Naive thymus-derived CD4-positive, alpha-beta T cell (primary cell): ENCODE measurements at regions of chr19 and their contacts with region 1.

Region 1: GRCh38 chr19:18058208-18059030 is 28.3 kb downstream of the IL12RB1 start:
- DNase-seq: peak; percentile 76 to 88 (median 82)
- ATAC-seq: peak; percentile 97
- H3K4me3 ChIP-seq: peak overlapping the region; percentile 31
- H3K4me3 Mint-ChIP-seq: peak overlapping the region in 8 of 10 donors; percentile 32 to 62 (median 53)
- H3K27ac ChIP-seq: peak overlapping the region; percentile 62
- H3K27ac Mint-ChIP-seq: peak overlapping the region; percentile 71 to 89 (median 86)
- H3K4me1 ChIP-seq: peaks cover 8 to 13% of the 10 kb centered on the region in 2 donors
- H3K4me1 Mint-ChIP-seq: peaks cover 0 to 18% (median 16%) of the 10 kb centered on the region in 7 donors
- H3K27me3 ChIP-seq: no peaks in the 10 kb centered on the region
- H3K27me3 Mint-ChIP-seq: no peaks in the 10 kb centered on the region

Region 2: GRCh38 chr19:17938092-17938845 is 120.2 kb before region 1 on chr19:
- CTCF ChIA-PET with region 1: interaction called, 8 read pairs
- POLR2A ChIA-PET with region 1: interaction called, 4 read pairs
- intact Hi-C with region 1: loop called (anchors 1 kb)
- DNase-seq: peak; percentile 67 to 85 (median 78)
- ATAC-seq: peak; percentile 98
- H3K4me3 ChIP-seq: no peak overlapping the region
- H3K4me3 Mint-ChIP-seq: no peak overlapping the region
- H3K27ac ChIP-seq: no peak overlapping the region
- H3K27ac Mint-ChIP-seq: no peak overlapping the region
- H3K4me1 ChIP-seq: peaks cover 5 to 8% of the 10 kb centered on the region in 2 donors
- H3K4me1 Mint-ChIP-seq: peaks cover 5 to 7% (median 6%) of the 10 kb centered on the region in 7 donors
- H3K27me3 ChIP-seq: no peaks in the 10 kb centered on the region
- H3K27me3 Mint-ChIP-seq: no peaks in the 10 kb centered on the region

Region 3: DNA sequence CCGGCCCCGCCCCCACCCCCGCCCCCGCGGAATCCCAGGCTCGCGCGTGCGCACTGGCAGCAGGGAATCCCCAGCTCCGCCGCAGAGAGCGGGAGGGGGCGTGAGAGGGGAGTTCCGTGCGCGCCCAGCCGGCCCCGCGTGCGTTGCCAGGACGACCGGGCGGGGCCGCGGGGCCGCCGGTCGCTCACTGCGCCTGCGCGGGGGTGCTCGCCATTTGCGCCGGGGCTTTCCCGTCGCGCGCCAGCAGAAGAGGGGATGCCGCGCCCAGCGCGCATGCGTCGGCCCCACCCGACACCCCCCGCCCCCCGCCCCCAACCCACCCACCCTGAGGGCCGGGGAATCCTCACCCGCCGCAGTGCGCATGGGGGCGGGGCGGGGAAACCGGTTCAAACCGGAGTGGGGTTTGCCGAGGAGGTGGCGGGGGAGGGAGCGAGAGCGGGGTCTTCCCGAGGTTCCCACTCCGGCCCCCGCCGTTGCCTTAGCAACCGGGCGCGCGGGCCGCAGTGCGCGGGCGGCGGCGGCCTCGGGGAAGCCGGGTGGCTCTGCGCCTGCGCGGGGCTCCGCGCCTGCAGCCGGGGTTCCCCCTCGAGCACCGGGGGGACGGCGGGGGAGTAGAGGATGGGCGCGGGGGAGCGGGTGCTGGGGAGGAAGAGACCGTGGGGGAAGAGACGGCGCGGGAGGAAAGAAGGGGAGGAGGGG is 110.5 kb before region 1 on chr19:
- CTCF ChIA-PET with region 1: interaction called, 3 read pairs
- POLR2A ChIA-PET with region 1: no interaction called
- intact Hi-C with region 1: loop called in 1 of 2 experiments (anchors 1 kb)
- DNase-seq: peak; percentile 91 to 99 (median 95)
- ATAC-seq: peak; percentile 87
- H3K4me3 ChIP-seq: peak overlapping the region; percentile 41
- H3K4me3 Mint-ChIP-seq: peak overlapping the region; percentile 68 to 88 (median 82)
- H3K27ac ChIP-seq: peak overlapping the region; percentile 99
- H3K27ac Mint-ChIP-seq: peak overlapping the region in 7 of 9 donors; percentile 48 to 96 (median 87)
- H3K4me1 ChIP-seq: peaks cover 37 to 50% of the 10 kb centered on the region in 2 donors
- H3K4me1 Mint-ChIP-seq: peaks cover 22 to 55% (median 43%) of the 10 kb centered on the region in 7 donors
- H3K27me3 ChIP-seq: peaks cover 18 to 28% of the 10 kb centered on the region in 2 donors
- H3K27me3 Mint-ChIP-seq: peaks cover 27 to 43% (median 30%) of the 10 kb centered on the region in 5 donors

Region 4: DNA sequence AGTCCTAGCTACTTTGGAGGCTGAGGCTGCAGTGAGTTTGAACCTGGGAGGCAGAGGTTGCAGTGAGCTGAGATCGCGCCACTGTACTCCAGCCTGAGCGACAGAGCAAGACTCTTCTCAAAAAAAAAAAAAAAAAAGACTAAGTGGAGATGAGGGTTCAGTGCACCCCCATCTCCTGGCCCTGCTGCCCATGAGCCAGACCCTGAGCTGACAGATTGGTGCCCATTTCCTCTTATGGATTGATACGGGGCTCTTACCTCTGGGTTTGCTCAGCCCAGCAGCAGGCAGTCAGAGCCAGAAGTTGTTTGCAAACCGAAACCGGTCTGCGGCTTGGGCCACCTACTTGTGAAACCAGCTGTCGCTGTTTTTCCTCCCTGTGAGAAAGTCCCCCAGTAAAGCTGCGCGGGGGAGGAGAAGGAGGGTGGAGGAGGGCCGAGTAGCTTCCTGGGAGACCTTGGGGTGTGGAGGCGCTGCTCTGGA is 13.6 kb before region 1 on chr19:
- CTCF ChIA-PET with region 1: interaction called, 12 read pairs
- POLR2A ChIA-PET with region 1: interaction called, 8 read pairs
- intact Hi-C with region 1: loop called (anchors 1 kb)
- DNase-seq: peak; percentile 51 to 87 (median 78)
- ATAC-seq: peak; percentile 97
- H3K4me3 ChIP-seq: peak overlapping the region; percentile 79
- H3K4me3 Mint-ChIP-seq: peak overlapping the region; percentile 66 to 90 (median 86)
- H3K27ac ChIP-seq: peak overlapping the region; percentile 76
- H3K27ac Mint-ChIP-seq: peak overlapping the region; percentile 81 to 98 (median 95)
- H3K4me1 ChIP-seq: peaks cover 12 to 31% of the 10 kb centered on the region in 2 donors
- H3K4me1 Mint-ChIP-seq: peaks cover 35 to 60% (median 55%) of the 10 kb centered on the region in 7 donors
- H3K27me3 ChIP-seq: no peaks in the 10 kb centered on the region
- H3K27me3 Mint-ChIP-seq: peaks cover 0 to 10% (median 0%) of the 10 kb centered on the region in 5 donors

Region 5: DNA sequence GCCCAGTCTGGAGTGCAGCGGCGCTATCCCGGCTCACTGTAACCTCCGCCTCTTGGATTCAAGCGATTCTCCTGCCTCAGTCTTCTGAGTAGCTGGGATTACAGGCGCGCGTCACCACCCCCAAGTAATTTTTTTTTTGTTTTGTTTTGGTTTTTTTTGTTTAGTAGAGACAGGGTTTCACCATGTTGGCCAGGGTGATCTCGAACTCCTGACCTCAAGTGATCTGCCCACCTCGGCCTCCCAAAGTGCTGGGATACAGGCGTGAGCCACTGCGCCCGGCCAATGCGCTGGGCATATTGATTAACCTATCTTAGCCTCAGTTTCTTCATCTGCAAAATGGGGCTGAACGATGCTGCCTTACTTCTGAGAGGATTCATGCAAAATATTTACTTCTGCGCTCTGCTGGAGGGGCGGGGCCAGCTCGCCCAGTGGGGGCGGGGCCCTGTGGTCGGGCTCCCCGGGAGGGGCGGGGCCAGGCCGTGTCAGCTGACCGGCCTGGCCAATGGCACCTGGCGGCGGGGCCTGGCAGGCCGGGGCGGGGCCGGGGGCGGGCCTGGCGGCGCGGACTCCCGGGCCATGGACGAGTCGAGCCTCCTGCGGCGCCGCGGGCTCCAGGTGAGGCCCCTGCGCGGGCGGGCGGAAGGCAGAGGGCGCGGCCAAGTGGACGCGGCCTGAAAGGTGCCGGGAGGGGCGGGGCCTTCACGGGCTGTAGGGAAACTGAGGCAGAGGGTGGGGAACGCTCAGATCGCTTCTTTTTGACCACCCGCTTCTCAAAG is 39.0 kb after region 1 on chr19 and contains the start of gene MAST3:
- CTCF ChIA-PET with region 1: no interaction called
- POLR2A ChIA-PET with region 1: interaction called, 4 read pairs
- intact Hi-C with region 1: loop called in 1 of 2 experiments (anchors 5 kb)
- DNase-seq: peak; percentile 82 to 96 (median 93)
- ATAC-seq: peak; percentile 100
- H3K4me3 ChIP-seq: peak within 1 kb of the TSS; percentile 31
- H3K4me3 Mint-ChIP-seq: peak within 1 kb of the TSS; percentile 86 to 89 (median 87)
- H3K27ac ChIP-seq: peak within 1 kb of the TSS; percentile 70
- H3K27ac Mint-ChIP-seq: peak within 1 kb of the TSS in 8 of 9 donors; percentile 73 to 94 (median 87)
- H3K4me1 ChIP-seq: peaks cover 21 to 22% of the 10 kb centered on the region in 2 donors
- H3K4me1 Mint-ChIP-seq: peaks cover 18 to 55% (median 49%) of the 10 kb centered on the region in 7 donors
- H3K27me3 ChIP-seq: no peaks in the 10 kb centered on the region
- H3K27me3 Mint-ChIP-seq: peaks cover 0 to 16% (median 0%) of the 10 kb centered on the region in 5 donors
- total RNA-seq, gene MAST3: 36.0 to 58.7 (median 50.6) TPM

Region 6: DNA sequence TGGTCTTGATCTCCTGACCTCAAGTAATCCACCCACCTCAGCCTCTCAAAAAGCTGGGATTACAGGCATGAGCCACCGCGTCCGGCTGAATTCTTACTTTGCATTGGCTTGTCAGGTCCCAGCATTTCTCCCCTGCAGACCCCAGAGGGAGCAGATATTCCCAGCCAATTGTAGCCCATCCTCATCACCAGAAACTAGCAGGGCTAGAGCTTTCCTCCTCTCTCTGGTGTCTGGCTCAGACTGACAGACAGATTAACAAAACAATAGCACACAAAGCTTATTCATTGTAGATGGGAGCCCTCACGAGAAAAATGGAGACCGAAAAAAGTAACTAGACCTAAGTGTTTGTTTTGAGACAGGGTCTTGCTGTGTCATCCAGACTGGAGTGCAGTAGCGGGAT is 127.1 kb after region 1 on chr19:
- CTCF ChIA-PET with region 1: no interaction called
- POLR2A ChIA-PET with region 1: no interaction called
- intact Hi-C with region 1: no loop called
- DNase-seq: no peak
- ATAC-seq: no peak
- H3K4me3 ChIP-seq: no peak overlapping the region
- H3K4me3 Mint-ChIP-seq: no peak overlapping the region
- H3K27ac ChIP-seq: no peak overlapping the region
- H3K27ac Mint-ChIP-seq: no peak overlapping the region
- H3K4me1 ChIP-seq: no peaks in the 10 kb centered on the region
- H3K4me1 Mint-ChIP-seq: no peaks in the 10 kb centered on the region
- H3K27me3 ChIP-seq: no peaks in the 10 kb centered on the region
- H3K27me3 Mint-ChIP-seq: peaks cover 0 to 2% (median 0%) of the 10 kb centered on the region in 5 donors